ENCODE measurements at regions of chr5 and their contacts with region 1.

Region 1: GRCh38 chr5:17373814-17374556 is 124.0 kb upstream of the TAF11L2 start:
- DNase-seq: no peak
- H3K4me3 ChIP-seq: no peak overlapping the region
- H3K27ac ChIP-seq: no peak overlapping the region
- H3K4me1 ChIP-seq: peaks cover 19% of the 10 kb centered on the region
- H3K27me3 ChIP-seq: no peaks in the 10 kb centered on the region
- CTCF ChIP-seq: no peak

Region 2: DNA sequence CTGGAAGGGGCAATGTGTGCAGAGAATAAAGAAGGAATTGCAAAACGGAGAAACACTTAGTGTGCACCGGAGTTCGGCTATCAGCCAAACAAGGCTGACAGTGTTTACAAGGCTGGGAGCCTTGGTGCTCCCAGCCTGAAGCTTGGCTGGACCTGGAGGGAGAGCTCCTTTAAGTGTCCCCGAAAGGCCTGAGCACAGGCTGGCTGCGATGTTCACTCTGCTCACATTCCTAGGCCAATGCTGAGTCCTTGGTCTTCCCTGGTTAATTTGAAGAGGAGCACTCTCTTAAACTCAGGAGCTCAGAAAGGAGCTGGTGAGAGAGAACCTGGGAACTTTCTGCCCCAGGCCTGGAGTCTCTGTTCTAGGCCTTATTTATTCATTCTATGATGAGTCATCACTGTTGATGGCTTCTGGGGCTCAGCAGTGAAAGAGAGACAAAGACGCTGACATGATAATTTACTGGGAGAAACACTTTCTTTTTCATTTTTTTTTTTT is 349.3 kb before region 1 on chr5:
- CTCF ChIA-PET with region 1: no interaction called
- dilution Hi-C with region 1: no loop called
- in situ Hi-C with region 1: no loop called
- intact Hi-C with region 1: no loop called
- DNase-seq: peak; percentile 49
- H3K4me3 ChIP-seq: no peak overlapping the region
- H3K27ac ChIP-seq: no peak overlapping the region
- H3K4me1 ChIP-seq: peaks cover 18% of the 10 kb centered on the region
- H3K27me3 ChIP-seq: no peaks in the 10 kb centered on the region
- CTCF ChIP-seq: no peak

Region 3: DNA sequence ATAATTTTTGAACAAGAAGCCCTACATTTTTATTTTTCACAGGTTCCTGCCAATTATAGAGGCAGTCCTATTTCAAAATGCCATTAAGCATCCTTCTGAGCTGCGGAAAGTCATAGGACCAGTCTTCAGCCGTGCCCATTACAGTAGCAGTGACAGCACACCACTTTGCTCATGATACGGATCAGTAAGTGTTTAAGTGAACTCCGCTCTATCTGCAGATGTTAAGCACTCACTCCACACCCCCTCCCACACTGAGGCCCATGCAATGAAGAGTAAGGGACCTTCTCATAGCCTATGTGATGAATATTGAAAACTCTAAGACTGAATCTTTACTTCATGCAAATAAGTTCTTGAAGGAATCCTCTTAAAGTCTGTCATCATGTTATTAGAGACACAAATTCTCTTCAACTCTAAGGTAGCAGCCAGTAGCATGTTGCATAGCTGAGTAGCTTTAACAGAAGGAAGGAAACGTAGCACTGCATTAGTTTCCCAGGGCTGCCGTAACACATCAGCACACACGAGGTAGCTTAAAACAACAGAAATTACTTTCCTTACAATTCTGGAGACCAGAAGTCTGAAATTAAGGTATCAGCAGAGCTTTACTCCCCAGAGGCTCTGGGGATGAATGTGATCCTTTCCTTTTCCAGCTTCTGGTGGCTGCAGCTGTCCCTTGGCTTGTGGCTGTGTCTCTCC is 103.7 kb after region 1 on chr5:
- CTCF ChIA-PET with region 1: interaction called, 13 read pairs
- dilution Hi-C with region 1: no loop called
- in situ Hi-C with region 1: no loop called
- intact Hi-C with region 1: no loop called
- DNase-seq: no peak
- H3K4me3 ChIP-seq: no peak overlapping the region
- H3K27ac ChIP-seq: no peak overlapping the region
- H3K4me1 ChIP-seq: no peaks in the 10 kb centered on the region
- H3K27me3 ChIP-seq: no peaks in the 10 kb centered on the region
- CTCF ChIP-seq: no peak

Measured in mammary epithelial cell (primary cell).